ENCODE measurements at regions of chr15 and their contacts with region 1.

Region 1: DNA sequence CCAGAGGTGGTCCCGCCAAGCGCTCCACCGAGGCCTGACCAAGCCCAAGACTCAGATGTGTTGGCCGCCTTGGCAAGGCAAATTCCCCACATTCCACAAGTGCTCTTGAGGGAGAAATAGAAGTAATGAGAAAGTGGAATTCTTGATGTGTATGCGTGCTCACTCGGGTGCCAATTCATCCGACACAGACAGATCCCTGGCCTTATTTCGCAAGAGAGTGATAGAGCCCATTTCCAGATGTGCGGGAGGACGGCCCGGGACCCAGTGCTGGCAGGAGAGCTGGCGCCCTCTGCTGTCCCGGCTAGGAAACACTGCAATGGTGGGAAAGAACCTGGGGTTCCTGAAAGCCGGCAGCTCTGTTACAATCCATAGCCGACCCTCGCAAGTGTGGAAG is 76.0 kb downstream of the HMG20A start:
- DNase-seq: peak; percentile 59 to 80 (median 69)
- H3K4me3 ChIP-seq: no peak overlapping the region
- H3K4me3 Mint-ChIP-seq: no peak overlapping the region
- H3K27ac ChIP-seq: no peak overlapping the region
- H3K27ac Mint-ChIP-seq: peak overlapping the region in 1 of 7 donors; percentile 36
- H3K4me1 ChIP-seq: peaks cover 16% of the 10 kb centered on the region in 2 donors
- H3K4me1 Mint-ChIP-seq: peaks cover 20% of the 10 kb centered on the region
- H3K27me3 ChIP-seq: no peaks in the 10 kb centered on the region
- H3K27me3 Mint-ChIP-seq: peaks cover 2 to 5% (median 3%) of the 10 kb centered on the region in 3 donors
- CTCF ChIP-seq: peak; percentile 93

Region 2: GRCh38 chr15:76973362-76973743 is 523.4 kb before region 1 on chr15:
- intact Hi-C with region 1: loop called in 1 of 2 experiments (anchors 5 kb)
- DNase-seq: peak; percentile 50 to 72 (median 63)
- H3K4me3 ChIP-seq: no peak overlapping the region
- H3K4me3 Mint-ChIP-seq: no peak overlapping the region
- H3K27ac ChIP-seq: no peak overlapping the region
- H3K27ac Mint-ChIP-seq: peak overlapping the region in 1 of 7 donors; percentile 25
- H3K4me1 ChIP-seq: peaks cover 23 to 24% of the 10 kb centered on the region in 2 donors
- H3K4me1 Mint-ChIP-seq: peaks cover 21% of the 10 kb centered on the region
- H3K27me3 ChIP-seq: no peaks in the 10 kb centered on the region
- H3K27me3 Mint-ChIP-seq: peaks cover 0 to 2% (median 1%) of the 10 kb centered on the region in 3 donors
- CTCF ChIP-seq: peak; percentile 97

Region 3: DNA sequence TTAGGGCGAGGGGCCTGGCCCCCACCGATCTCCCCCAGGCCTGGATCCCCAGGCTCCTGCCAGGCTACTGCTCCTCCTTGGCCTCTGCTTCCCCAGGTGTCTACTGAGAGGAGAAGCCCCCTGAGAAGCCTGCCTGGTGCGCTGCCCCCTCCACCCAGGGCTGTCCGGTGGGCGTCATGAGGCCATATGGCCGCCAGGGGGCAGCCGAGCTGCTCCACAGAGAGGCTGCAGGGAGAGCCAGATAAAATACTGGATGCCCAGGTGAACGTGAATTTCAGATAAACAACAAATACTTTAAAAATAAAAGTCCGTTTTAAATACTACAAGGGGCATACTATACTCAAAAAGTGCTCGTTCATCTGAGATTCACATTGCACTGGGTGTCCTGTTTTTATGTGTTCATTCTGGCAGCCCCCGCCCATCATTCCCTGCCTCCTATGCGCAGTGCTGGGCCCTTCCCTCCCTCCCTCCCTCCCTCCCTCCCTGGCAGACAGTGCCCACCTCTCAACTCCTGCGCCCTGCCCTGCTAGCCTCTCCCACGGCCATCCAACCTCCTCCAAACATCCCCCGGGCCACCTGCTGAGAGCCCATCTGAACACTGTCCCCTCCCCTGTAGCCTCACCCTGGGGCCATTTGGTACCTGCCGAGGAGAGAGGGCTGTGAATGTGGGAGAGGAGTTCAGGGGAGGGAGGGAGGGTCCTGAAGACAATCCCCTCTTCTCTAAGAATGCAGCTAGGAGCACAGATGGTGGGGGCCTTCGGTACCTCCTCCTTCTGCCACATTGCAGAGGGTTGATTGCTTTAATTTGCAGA is 472.2 kb before region 1 on chr15:
- intact Hi-C with region 1: loop called (anchors 10 kb)
- DNase-seq: peak in 2 of 3 donors; percentile 35 to 36
- H3K4me3 ChIP-seq: no peak overlapping the region
- H3K4me3 Mint-ChIP-seq: no peak overlapping the region
- H3K27ac ChIP-seq: peak overlapping the region in 1 of 2 donors; percentile 68
- H3K27ac Mint-ChIP-seq: peak overlapping the region in 2 of 7 donors; percentile 72 to 73
- H3K4me1 ChIP-seq: peaks cover 8 to 17% of the 10 kb centered on the region in 2 donors
- H3K4me1 Mint-ChIP-seq: peaks cover 33% of the 10 kb centered on the region
- H3K27me3 ChIP-seq: no peaks in the 10 kb centered on the region
- H3K27me3 Mint-ChIP-seq: no peaks in the 10 kb centered on the region
- CTCF ChIP-seq: peak; percentile 98

Region 4: DNA sequence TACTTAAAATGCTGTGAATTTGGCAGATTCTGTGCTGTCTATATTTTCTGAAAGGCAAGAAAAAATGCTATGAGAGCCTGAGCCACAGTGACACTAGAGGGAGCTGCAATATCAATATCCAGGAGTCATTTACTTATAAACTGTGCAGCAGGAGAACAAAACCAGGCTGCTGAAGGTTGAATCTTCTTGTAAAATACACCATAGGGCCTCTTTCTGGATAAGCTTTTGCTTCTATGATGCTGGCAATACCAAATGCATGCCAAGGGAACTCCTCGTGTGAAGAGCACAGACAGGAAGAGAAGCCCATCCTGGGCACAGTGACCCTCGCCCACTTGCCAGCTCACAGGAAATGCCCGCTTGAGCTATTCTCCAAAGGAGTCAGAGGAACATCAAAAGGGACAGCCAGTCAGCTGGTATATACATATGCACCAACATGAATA is 377.8 kb before region 1 on chr15:
- intact Hi-C with region 1: loop called (anchors 2 to 5 kb)
- DNase-seq: peak; percentile 18 to 45 (median 43)
- H3K4me3 ChIP-seq: no peak overlapping the region
- H3K4me3 Mint-ChIP-seq: no peak overlapping the region
- H3K27ac ChIP-seq: no peak overlapping the region
- H3K27ac Mint-ChIP-seq: no peak overlapping the region
- H3K4me1 ChIP-seq: no peaks in the 10 kb centered on the region
- H3K4me1 Mint-ChIP-seq: peaks cover 4% of the 10 kb centered on the region
- H3K27me3 ChIP-seq: no peaks in the 10 kb centered on the region
- H3K27me3 Mint-ChIP-seq: peaks cover 0 to 4% (median 2%) of the 10 kb centered on the region in 3 donors
- CTCF ChIP-seq: peak; percentile 68

Region 5: GRCh38 chr15:77186594-77187011 is 310.1 kb before region 1 on chr15:
- intact Hi-C with region 1: loop called in 1 of 2 experiments (anchors 5 kb)
- DNase-seq: peak in 1 of 3 donors; percentile 16
- H3K4me3 ChIP-seq: no peak overlapping the region
- H3K4me3 Mint-ChIP-seq: no peak overlapping the region
- H3K27ac ChIP-seq: no peak overlapping the region
- H3K27ac Mint-ChIP-seq: peak overlapping the region in 2 of 7 donors; percentile 6 to 25
- H3K4me1 ChIP-seq: peaks cover 29 to 41% of the 10 kb centered on the region in 2 donors
- H3K4me1 Mint-ChIP-seq: peaks cover 45% of the 10 kb centered on the region
- H3K27me3 ChIP-seq: no peaks in the 10 kb centered on the region
- H3K27me3 Mint-ChIP-seq: peaks cover 2% of the 10 kb centered on the region in 3 donors
- CTCF ChIP-seq: peak; percentile 15

Region 6: GRCh38 chr15:77455696-77456321 is 40.9 kb before region 1 on chr15:
- intact Hi-C with region 1: no loop called
- DNase-seq: no peak
- H3K4me3 ChIP-seq: no peak overlapping the region
- H3K4me3 Mint-ChIP-seq: no peak overlapping the region
- H3K27ac ChIP-seq: no peak overlapping the region
- H3K27ac Mint-ChIP-seq: no peak overlapping the region
- H3K4me1 ChIP-seq: no peaks in the 10 kb centered on the region
- H3K4me1 Mint-ChIP-seq: no peaks in the 10 kb centered on the region
- H3K27me3 ChIP-seq: no peaks in the 10 kb centered on the region
- H3K27me3 Mint-ChIP-seq: peaks cover 0 to 2% (median 0%) of the 10 kb centered on the region in 3 donors
- CTCF ChIP-seq: no peak

Measured in CD14-positive monocyte (primary cell).